Activated T-helper 1 cell treated with anti-CD3 and anti-CD28 coated beads, Interleukin-12 subunit alpha, Interleukin-12 subunit beta, Interleukin-2, Interleukin-4 antibody, amounts not matched to agents 30 ng/mL and 10 ng/mL and 1 ng/mL, durations not matched to agents 14 hours and 24 hours and 36 hours (primary cell): ENCODE measurements at regions of chr2 and their contacts with region 1.

Region 1: DNA sequence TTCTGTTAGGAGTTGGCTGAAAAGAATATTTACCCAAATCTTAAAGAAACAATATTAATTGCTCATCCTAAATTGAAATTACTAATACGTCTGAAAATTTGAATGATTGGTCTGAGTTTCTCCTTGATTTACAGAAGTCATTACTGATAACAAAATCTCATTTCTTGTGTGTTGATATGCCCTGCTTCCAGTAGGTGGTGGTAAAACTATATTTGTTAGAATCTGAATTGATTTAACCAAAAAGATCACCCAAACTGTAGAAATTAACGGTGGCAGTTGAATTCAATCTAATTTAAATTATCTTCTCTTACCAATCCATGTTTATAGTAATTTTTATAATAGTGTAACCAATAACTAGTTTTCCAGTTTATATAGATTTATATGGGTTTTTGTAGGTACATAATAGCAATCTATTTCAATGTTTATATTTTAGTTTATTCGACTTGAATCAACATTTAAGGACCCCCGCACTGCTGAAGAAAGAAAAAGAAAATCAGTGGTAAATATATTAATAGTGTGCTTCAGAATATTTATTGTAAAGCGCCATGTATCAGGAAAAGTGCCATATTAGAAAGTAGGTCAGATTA is 38.3 kb downstream of the PAPOLG start:
- DNase-seq: no peak
- H3K4me3 Mint-ChIP-seq: no peak overlapping the region
- H3K27ac Mint-ChIP-seq: no peak overlapping the region
- H3K4me1 Mint-ChIP-seq: peaks cover 16% of the 10 kb centered on the region
- H3K27me3 Mint-ChIP-seq: no peaks in the 10 kb centered on the region

Region 2: GRCh38 chr2:60707750-60708371 is 86.5 kb before region 1 on chr2:
- intact Hi-C with region 1: loop called (anchors 1 kb)
- DNase-seq: no peak
- H3K4me3 Mint-ChIP-seq: no peak overlapping the region
- H3K27ac Mint-ChIP-seq: no peak overlapping the region
- H3K4me1 Mint-ChIP-seq: no peaks in the 10 kb centered on the region
- H3K27me3 Mint-ChIP-seq: no peaks in the 10 kb centered on the region

Region 3: DNA sequence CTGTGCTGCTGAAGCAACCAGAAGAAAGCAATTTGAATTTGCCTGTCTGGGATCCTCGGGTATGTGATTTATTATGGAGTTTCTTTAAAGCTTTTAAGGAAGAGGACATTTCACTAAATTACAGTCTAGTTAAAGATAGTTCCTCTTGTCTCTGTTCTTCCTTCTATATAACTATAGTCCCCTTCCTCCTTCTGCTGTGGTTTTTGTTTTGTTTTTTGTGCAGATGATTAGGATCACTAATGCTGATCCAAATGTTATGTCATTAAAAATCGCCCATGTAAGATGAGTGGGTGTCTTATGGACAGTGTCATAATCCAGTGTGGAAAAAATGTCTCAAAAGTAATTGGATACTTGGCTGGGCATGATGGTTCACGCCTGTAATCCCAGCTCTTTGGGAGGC is 13.6 kb before region 1 on chr2:
- intact Hi-C with region 1: no loop called
- DNase-seq: no peak
- H3K4me3 Mint-ChIP-seq: no peak overlapping the region
- H3K27ac Mint-ChIP-seq: peak overlapping the region; percentile 63
- H3K4me1 Mint-ChIP-seq: no peaks in the 10 kb centered on the region
- H3K27me3 Mint-ChIP-seq: no peaks in the 10 kb centered on the region

Region 4: GRCh38 chr2:60899230-60899891 is 105.0 kb after region 1 on chr2:
- intact Hi-C with region 1: loop called (anchors 1 kb)
- DNase-seq: no peak
- H3K4me3 Mint-ChIP-seq: peak overlapping the region; percentile 54
- H3K27ac Mint-ChIP-seq: peak overlapping the region; percentile 95
- H3K4me1 Mint-ChIP-seq: peaks cover 35% of the 10 kb centered on the region
- H3K27me3 Mint-ChIP-seq: peaks cover 2% of the 10 kb centered on the region